ENCODE measurements at regions of chr4 and their contacts with region 1.

Region 1: GRCh38 chr4:88211473-88212252 is 53.2 kb upstream of the ABCG2 start:
- DNase-seq: peak in 2 of 4 donors; percentile 61
- ATAC-seq: peak; percentile 77
- H3K4me3 ChIP-seq: no peak overlapping the region
- H3K27ac ChIP-seq: no peak overlapping the region
- H3K4me1 ChIP-seq: peaks cover 4 to 6% of the 10 kb centered on the region in 2 donors
- H3K27me3 ChIP-seq: no peaks in the 10 kb centered on the region
- CTCF ChIP-seq: peak; percentile 48 to 61

Region 2: GRCh38 chr4:87973283-87974169 is 238.1 kb before region 1 on chr4:
- intact Hi-C with region 1: no loop called
- DNase-seq: peak in 3 of 4 donors; percentile 24 to 66 (median 54)
- ATAC-seq: peak; percentile 88
- H3K4me3 ChIP-seq: no peak overlapping the region
- H3K27ac ChIP-seq: no peak overlapping the region
- H3K4me1 ChIP-seq: peaks cover 0 to 15% of the 10 kb centered on the region in 2 donors
- H3K27me3 ChIP-seq: peaks cover 0 to 31% of the 10 kb centered on the region in 2 donors
- CTCF ChIP-seq: peak; percentile 76 to 80

Region 3: DNA sequence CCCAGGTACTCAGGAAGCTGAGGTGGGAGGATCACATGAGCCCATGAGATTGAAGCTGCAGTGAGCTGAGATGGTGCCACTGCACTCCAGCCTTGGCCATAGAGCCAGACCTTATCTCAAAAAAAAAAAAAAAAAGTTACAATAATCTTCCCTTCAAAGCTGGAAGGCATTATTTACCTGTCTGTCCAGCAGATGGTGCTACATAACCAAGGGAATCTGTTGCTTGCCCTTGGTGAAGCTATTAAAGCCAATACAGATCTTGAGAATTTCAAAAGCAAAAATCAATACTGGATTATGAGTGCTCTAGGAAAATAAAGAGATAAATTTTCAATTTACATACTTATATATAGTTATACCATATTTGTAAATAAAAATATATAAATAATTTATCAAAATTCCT is 178.4 kb before region 1 on chr4:
- intact Hi-C with region 1: loop called in 1 of 2 experiments (anchors 5 kb)
- DNase-seq: peak in 2 of 4 donors; percentile 22 to 68
- ATAC-seq: peak; percentile 84
- H3K4me3 ChIP-seq: no peak overlapping the region
- H3K27ac ChIP-seq: no peak overlapping the region
- H3K4me1 ChIP-seq: peaks cover 1 to 14% of the 10 kb centered on the region in 2 donors
- H3K27me3 ChIP-seq: no peaks in the 10 kb centered on the region
- CTCF ChIP-seq: peak; percentile 60 to 62

Region 4: GRCh38 chr4:88143504-88143903 is 68.2 kb before region 1 on chr4:
- intact Hi-C with region 1: no loop called
- DNase-seq: no peak
- ATAC-seq: no peak
- H3K4me3 ChIP-seq: no peak overlapping the region
- H3K27ac ChIP-seq: no peak overlapping the region
- H3K4me1 ChIP-seq: no peaks in the 10 kb centered on the region
- H3K27me3 ChIP-seq: no peaks in the 10 kb centered on the region
- CTCF ChIP-seq: no peak

Region 5: GRCh38 chr4:88366460-88366859 is 154.8 kb after region 1 on chr4:
- intact Hi-C with region 1: loop called in 1 of 2 experiments (anchors 10 kb)
- DNase-seq: no peak
- ATAC-seq: no peak
- H3K4me3 ChIP-seq: no peak overlapping the region
- H3K27ac ChIP-seq: no peak overlapping the region
- H3K4me1 ChIP-seq: no peaks in the 10 kb centered on the region
- H3K27me3 ChIP-seq: no peaks in the 10 kb centered on the region
- CTCF ChIP-seq: no peak

Region 6: DNA sequence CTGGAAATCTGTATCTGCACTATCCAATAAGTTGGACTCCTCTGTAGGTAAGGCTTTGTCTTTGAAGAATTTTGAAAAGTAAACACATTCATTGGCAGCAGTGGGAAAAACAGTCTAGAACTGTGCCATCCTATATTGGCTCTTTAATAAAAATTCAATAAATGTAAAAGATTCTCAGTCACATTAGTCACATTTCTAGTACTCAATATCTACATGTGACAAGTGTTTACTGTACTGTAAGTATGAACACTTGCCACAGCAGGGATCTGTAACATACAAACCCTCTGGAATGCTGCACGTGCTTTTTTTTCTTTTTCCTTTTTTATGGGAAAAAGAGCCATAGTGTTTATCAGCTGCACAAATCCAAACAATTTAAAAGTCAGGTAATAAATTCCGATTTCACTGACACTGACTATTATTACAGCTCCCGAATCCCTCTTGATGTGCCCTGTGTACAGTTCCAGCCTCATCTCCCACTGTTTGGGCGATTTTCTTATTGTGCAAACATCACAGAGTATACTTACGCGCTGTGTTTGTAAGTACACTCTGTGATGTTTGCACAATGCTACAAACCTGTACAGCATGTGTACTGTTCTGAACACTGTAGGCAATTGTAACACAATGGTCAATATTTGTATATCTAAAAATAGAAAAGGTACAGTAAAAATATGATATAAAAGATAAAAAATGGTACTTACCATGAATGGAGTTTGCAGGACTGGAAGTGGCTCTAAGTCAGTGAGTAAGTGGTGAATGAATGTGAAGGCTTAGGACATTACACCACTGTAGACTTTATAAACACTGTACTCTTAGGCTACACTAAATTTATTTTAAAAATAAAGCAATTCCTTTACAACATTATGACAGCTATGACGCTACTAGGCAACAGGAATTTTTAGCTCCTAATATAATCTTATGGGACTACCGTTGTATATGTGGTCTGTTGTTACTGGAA is 303.2 kb after region 1 on chr4:
- intact Hi-C with region 1: loop called in 1 of 2 experiments (anchors 5 kb)
- DNase-seq: peak in 2 of 4 donors; percentile 10 to 44
- ATAC-seq: peak; percentile 91
- H3K4me3 ChIP-seq: no peak overlapping the region
- H3K27ac ChIP-seq: no peak overlapping the region
- H3K4me1 ChIP-seq: peaks cover 0 to 5% of the 10 kb centered on the region in 2 donors
- H3K27me3 ChIP-seq: no peaks in the 10 kb centered on the region
- CTCF ChIP-seq: no peak

Measured in left lung (tissue), 14 donors.